AG04449 (cell line): ENCODE measurements at regions of chr1 and their contacts with region 1.

Region 1: DNA sequence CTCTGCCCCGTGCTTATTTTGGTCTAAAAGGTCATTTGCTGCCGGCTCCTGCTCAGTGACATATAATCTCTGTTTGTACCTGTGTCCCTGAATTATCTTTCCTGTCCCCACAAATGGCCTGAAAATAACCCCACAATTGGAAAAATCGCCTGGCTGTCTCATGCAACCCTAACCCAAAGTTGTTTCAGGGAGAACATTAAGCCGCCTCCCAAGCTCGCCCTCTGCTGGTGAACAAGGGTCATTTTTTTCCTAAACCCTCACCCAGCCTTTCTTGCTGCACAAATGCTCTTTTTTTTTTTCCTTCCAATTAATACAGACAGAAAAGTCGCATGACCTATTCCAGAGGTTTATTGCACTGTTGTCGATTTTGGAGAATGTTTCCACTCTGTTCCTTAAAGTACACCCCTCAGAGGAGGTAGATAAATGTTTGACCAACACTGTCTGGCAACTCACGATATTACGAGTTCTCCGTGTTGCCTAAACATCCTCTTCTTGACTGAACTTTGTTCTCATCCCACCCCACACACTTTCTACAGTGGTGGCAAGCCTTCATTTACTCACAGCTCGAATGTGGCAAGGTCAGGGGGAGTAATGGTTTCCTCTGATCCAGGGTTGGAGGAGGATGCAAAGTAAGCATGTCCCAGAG is 148.7 kb downstream of the ZZZ3 start:
- DNase-seq: no peak
- H3K4me3 ChIP-seq: no peak overlapping the region
- CTCF ChIP-seq: peak; percentile 69

Region 2: GRCh38 chr1:77143529-77144121 is 390.2 kb before region 1 on chr1:
- CTCF ChIA-PET with region 1: interaction called, 13 read pairs
- POLR2A ChIA-PET with region 1: no interaction called
- DNase-seq: no peak
- H3K4me3 ChIP-seq: no peak overlapping the region
- CTCF ChIP-seq: no peak

Region 3: GRCh38 chr1:77156214-77156613 is 377.6 kb before region 1 on chr1:
- CTCF ChIA-PET with region 1: interaction called, 11 read pairs
- POLR2A ChIA-PET with region 1: no interaction called
- DNase-seq: no peak
- H3K4me3 ChIP-seq: no peak overlapping the region
- CTCF ChIP-seq: no peak

Region 4: DNA sequence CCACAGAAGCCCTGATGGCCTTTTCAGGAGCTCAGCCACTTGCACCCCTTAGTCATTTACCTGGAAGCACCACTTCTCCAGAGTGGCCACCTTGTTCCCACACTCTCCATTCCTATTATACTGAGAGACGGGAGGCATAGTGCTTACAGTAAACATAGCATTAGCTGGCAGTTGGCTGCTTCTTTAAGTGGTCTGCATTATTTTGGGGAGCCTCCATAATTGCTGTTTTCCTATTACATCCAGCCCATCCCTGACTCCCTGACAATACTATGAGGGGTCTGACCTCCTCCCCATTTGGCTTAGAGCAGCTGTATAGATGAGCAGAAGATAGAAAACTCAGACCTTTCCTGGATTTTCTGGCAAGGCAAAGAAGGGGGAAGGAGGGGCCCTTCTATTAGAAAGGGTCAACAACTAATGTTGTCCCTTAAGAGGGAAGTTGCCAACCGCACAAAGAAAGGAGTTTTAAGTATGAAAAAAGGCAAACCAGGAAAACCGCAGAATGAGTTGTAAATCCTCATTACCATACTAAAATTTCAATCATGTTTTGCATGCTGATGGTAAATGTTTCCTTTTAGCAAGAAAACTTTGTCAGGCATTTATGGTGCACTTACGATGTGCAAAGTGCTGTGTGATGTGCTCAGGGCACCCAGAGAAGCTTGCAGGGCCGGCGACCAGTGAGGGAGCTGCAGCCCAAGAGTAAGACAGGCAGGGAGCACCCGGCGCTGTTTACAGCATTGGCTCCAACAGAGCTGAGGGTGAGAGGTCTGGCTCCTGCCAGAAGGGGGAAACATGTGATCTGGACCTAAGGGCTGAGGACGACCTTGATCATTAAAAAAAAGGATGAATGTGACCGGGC is 18.6 kb before region 1 on chr1:
- CTCF ChIA-PET with region 1: interaction called, 27 read pairs
- POLR2A ChIA-PET with region 1: interaction called, 16 read pairs
- DNase-seq: peak; percentile 46
- H3K4me3 ChIP-seq: peak overlapping the region; percentile 10; the same call in 1 of the 2 replicates
- CTCF ChIP-seq: peak; percentile 33

Region 5: DNA sequence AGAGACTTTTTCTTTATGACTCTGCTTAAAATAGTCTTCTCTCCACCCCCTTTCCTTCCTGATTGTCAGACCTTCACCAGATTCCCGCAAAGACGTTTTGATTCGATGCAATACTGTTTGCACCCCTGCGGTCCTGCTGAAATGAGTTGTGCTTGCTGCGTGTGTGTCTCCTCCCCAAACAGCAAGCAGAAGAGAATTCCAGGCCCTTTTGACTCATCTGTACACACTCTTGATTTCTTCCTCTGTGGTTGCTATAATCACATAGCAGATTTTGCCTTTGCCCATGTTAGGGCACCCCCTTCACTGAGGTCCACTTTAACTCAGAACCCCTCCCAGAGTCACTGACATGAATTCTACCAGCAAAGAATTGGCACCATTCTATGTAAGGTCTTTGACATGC is 12.2 kb after region 1 on chr1:
- CTCF ChIA-PET with region 1: interaction called, 23 read pairs
- POLR2A ChIA-PET with region 1: interaction called, 5 read pairs
- DNase-seq: peak; percentile 90
- H3K4me3 ChIP-seq: no peak overlapping the region
- CTCF ChIP-seq: no peak

Region 6: DNA sequence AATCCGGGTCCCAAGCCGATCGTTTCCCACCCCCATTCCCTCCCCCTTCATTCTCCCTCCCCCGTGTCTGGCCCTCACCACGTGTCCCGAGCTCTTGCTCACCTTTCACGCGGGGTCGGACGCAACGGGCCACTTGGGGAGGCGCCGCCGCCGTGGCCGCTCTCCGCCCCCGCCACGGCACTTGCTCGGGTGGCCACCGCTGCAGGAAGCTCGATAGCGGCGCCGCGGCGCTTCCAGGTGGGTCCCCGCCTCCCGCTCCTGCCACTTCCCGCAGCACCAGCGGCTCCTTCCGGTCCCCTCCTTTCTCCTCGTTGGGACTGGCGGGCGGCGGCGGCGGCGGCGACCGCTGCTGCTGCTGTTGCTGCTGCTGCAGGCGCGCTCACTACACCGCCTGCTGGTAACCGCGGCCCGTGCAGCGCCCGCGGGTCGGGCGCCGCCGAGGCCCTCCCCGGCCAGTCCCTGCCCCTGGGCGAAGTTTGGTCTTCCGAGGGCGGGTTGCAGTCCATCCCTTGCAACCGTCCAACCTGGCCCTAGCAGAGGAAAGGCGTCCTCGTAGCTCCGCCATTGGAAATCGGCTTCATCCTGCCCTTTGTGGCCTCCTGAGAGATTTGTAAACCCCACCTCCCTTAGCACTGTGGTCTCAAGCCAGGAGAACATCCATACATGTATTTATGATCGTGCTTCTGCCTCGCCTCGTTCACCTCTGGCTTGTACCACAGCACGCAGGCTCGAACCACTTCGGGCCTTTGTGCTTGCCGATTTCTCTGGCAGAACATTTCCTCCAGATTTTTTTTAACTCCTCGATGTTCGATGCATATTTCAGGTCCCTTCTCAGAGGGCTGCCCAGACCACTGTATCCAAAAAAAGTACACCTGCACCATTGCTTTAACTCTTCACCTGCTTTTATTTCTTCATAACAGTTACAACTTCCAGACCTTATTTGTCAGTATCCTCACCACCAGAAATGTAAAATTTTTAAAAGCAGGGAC is 149.7 kb after region 1 on chr1:
- CTCF ChIA-PET with region 1: interaction called, 20 read pairs
- POLR2A ChIA-PET with region 1: no interaction called
- DNase-seq: no peak
- H3K4me3 ChIP-seq: peak overlapping the region; percentile 89
- CTCF ChIP-seq: peak; percentile 80